ENCODE measurements at regions of chr22 and their contacts with region 1.

Region 1: DNA sequence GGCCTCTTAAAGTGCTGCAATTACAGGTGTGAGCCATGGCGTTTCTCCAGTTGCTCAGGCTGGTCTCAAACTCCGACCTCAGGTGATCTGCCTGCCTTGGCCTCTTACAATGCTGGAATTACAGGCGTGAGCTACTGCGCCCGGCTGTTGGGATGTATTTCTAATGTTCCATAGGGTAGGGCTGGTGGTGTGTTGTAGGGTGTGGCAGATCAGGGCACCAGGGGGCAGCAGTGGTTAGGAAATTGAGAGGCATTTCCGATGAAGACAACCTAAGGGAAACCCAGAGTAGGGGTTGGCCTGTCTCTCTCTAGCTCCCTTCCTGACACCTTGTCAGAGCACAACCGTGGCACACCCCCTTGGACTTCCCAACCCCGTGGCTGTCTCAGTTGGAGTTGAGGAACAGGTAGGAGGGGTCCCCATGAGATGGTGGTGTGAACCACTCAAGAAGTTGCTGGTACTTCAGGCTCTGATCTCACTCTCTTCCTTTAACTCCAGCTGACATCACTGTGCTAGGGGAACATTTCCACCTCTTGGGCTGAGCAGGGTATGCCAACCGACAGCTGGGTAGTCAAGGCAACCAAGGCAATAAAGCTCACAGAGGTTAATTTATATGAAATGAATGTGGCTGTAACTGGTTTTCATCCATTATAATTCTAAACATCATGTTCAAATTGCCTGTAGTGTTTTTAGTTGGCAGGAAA is 33.0 kb downstream of the YWHAH start:
- DNase-seq: peak; percentile 53 to 77 (median 70)
- ATAC-seq: peak; percentile 91
- H3K4me3 ChIP-seq: no peak overlapping the region
- H3K4me3 Mint-ChIP-seq: no peak overlapping the region
- H3K27ac ChIP-seq: no peak overlapping the region
- H3K27ac Mint-ChIP-seq: peak overlapping the region in 2 of 9 donors; percentile 50 to 60
- H3K4me1 ChIP-seq: no peaks in the 10 kb centered on the region
- H3K4me1 Mint-ChIP-seq: peaks cover 0 to 7% (median 0%) of the 10 kb centered on the region in 7 donors
- H3K27me3 ChIP-seq: no peaks in the 10 kb centered on the region
- H3K27me3 Mint-ChIP-seq: peaks cover 0 to 18% (median 0%) of the 10 kb centered on the region in 5 donors

Region 2: DNA sequence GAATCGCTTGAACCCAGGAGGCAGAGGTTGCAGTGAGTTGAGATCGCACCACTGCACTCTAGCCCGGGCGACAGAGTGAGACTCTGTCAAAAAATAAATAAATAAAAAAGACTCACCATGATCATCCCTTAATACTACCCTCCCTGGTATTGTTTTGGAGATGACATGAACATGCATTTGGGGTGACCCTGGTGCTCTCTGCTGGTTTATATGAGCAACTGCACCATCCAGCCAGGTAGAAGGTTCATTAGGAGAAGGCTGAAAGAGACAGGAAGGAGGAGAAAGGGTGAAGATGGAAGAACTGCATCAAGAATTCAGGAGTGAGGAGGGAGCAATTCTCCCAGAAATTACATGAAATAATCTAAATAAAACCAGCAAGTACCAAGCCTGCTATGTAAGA is 103.6 kb after region 1 on chr22:
- CTCF ChIA-PET with region 1: interaction called, 9 read pairs
- POLR2A ChIA-PET with region 1: no interaction called
- intact Hi-C with region 1: loop called in 1 of 2 experiments (anchors 1 kb)
- DNase-seq: peak in 7 of 9 donors; percentile 2 to 38 (median 25)
- ATAC-seq: peak; percentile 63
- H3K4me3 ChIP-seq: no peak overlapping the region
- H3K4me3 Mint-ChIP-seq: no peak overlapping the region
- H3K27ac ChIP-seq: no peak overlapping the region
- H3K27ac Mint-ChIP-seq: no peak overlapping the region
- H3K4me1 ChIP-seq: no peaks in the 10 kb centered on the region
- H3K4me1 Mint-ChIP-seq: peaks cover 0 to 3% (median 0%) of the 10 kb centered on the region in 7 donors
- H3K27me3 ChIP-seq: no peaks in the 10 kb centered on the region
- H3K27me3 Mint-ChIP-seq: peaks cover 0 to 35% (median 5%) of the 10 kb centered on the region in 5 donors

Region 3: GRCh38 chr22:32265882-32266767 is 288.8 kb after region 1 on chr22:
- CTCF ChIA-PET with region 1: interaction called, 11 read pairs
- POLR2A ChIA-PET with region 1: no interaction called
- intact Hi-C with region 1: loop called in 1 of 2 experiments (anchors 1 kb)
- DNase-seq: peak; percentile 11 to 66 (median 56)
- ATAC-seq: peak; percentile 75
- H3K4me3 ChIP-seq: no peak overlapping the region
- H3K4me3 Mint-ChIP-seq: peak overlapping the region in 6 of 10 donors; percentile 8 to 55 (median 30)
- H3K27ac ChIP-seq: no peak overlapping the region
- H3K27ac Mint-ChIP-seq: peak overlapping the region in 1 of 9 donors; percentile 28
- H3K4me1 ChIP-seq: no peaks in the 10 kb centered on the region
- H3K4me1 Mint-ChIP-seq: peaks cover 0 to 11% (median 7%) of the 10 kb centered on the region in 7 donors
- H3K27me3 ChIP-seq: no peaks in the 10 kb centered on the region
- H3K27me3 Mint-ChIP-seq: peaks cover 2 to 8% (median 6%) of the 10 kb centered on the region in 5 donors

Region 4: GRCh38 chr22:32389685-32390084 is 412.4 kb after region 1 on chr22:
- CTCF ChIA-PET with region 1: interaction called, 6 read pairs
- POLR2A ChIA-PET with region 1: no interaction called
- intact Hi-C with region 1: loop called in 1 of 2 experiments (anchors 1 kb)
- DNase-seq: peak in 1 of 9 donors; percentile 15
- ATAC-seq: no peak
- H3K4me3 ChIP-seq: no peak overlapping the region
- H3K4me3 Mint-ChIP-seq: no peak overlapping the region
- H3K27ac ChIP-seq: no peak overlapping the region
- H3K27ac Mint-ChIP-seq: peak overlapping the region in 6 of 9 donors; percentile 5 to 67 (median 34)
- H3K4me1 ChIP-seq: no peaks in the 10 kb centered on the region
- H3K4me1 Mint-ChIP-seq: no peaks in the 10 kb centered on the region
- H3K27me3 ChIP-seq: no peaks in the 10 kb centered on the region
- H3K27me3 Mint-ChIP-seq: no peaks in the 10 kb centered on the region